ENCODE measurements at regions of chr5 and their contacts with region 1.

Region 1: GRCh38 chr5:140547508-140548299 is at the start of gene EIF4EBP3:
- DNase-seq: peak; percentile 89 to 95
- ATAC-seq: peak; percentile 97 to 99 (median 98)
- H3K4me3 ChIP-seq: peak within 1 kb of the TSS; percentile 60
- H3K4me3 Mint-ChIP-seq: peak within 1 kb of the TSS; percentile 86
- H3K27ac ChIP-seq: peak within 1 kb of the TSS; percentile 81
- H3K27ac Mint-ChIP-seq: peak within 1 kb of the TSS; percentile 87 to 95
- H3K4me1 ChIP-seq: peaks cover 30% of the 10 kb centered on the region
- H3K4me1 Mint-ChIP-seq: peaks cover 27 to 28% of the 10 kb centered on the region in 2 donors
- H3K27me3 ChIP-seq: no peaks in the 10 kb centered on the region
- H3K27me3 Mint-ChIP-seq: no peaks in the 10 kb centered on the region
- CTCF ChIP-seq: peak; percentile 65
- total RNA-seq, gene EIF4EBP3: 5.8 to 9.4 (median 6.0) TPM

Region 2: DNA sequence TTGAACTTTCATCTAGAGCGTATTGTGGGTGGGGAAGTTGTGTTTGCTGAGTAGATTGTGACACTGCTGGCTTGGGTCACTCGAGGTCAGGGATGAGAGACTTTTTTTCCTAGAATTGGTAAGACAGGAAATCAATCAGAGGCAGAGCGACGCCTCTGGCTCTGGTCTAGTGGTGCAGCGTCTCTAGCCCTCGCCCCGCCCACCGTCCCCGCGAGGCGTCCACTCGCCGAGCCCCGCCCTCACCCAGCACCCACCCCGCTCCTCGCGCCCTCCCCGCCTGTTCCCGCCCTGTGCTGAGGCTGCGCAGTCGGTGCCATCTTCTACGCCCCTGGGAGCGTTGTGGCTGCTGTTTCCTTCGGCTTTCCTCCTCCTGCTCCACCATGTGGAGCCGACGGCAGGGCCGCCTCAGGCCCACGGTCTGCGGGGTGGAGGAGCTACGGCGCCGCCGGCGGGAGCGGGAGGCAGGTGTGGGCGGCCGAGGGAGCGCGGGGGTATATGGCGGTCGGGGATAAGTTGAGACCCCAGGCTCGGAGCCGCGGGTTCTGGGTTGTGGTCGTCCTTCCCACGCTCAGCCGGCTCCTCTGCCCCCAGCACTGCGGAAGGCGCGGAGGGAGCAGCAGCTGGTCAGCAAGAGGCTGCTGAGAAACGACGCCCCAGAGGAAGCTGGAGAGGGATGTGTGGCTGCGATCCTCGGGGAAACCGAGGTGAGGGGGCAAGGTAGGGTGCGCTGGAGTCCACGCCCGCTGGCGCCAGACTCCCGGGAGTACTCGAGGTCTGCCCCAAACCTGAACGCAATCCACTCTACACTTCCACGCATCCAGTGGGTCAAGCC is 91.7 kb after region 1 on chr5 and contains the start of gene TMCO6:
- intact Hi-C with region 1: loop called (anchors 1 kb)
- DNase-seq: peak; percentile 94 to 98
- ATAC-seq: peak; percentile 98 to 100 (median 99)
- H3K4me3 ChIP-seq: peak within 1 kb of the TSS; percentile 65
- H3K4me3 Mint-ChIP-seq: peak within 1 kb of the TSS; percentile 92
- H3K27ac ChIP-seq: peak within 1 kb of the TSS; percentile 84
- H3K27ac Mint-ChIP-seq: peak within 1 kb of the TSS; percentile 93 to 95
- H3K4me1 ChIP-seq: peaks cover 18% of the 10 kb centered on the region
- H3K4me1 Mint-ChIP-seq: peaks cover 15 to 35% of the 10 kb centered on the region in 2 donors
- H3K27me3 ChIP-seq: no peaks in the 10 kb centered on the region
- H3K27me3 Mint-ChIP-seq: no peaks in the 10 kb centered on the region
- CTCF ChIP-seq: peak; percentile 61
- total RNA-seq, gene TMCO6: 17.9 to 19.5 (median 18.8) TPM

Region 3: GRCh38 chr5:141835928-141836670 is 1288.4 kb after region 1 on chr5:
- intact Hi-C with region 1: no loop called
- DNase-seq: no peak
- ATAC-seq: no peak
- H3K4me3 ChIP-seq: no peak overlapping the region
- H3K4me3 Mint-ChIP-seq: no peak overlapping the region
- H3K27ac ChIP-seq: no peak overlapping the region
- H3K27ac Mint-ChIP-seq: peak overlapping the region in 1 of 2 donors; percentile 30
- H3K4me1 ChIP-seq: peaks cover 5% of the 10 kb centered on the region
- H3K4me1 Mint-ChIP-seq: no peaks in the 10 kb centered on the region
- H3K27me3 ChIP-seq: no peaks in the 10 kb centered on the region
- H3K27me3 Mint-ChIP-seq: peaks cover 0 to 14% of the 10 kb centered on the region in 2 donors
- CTCF ChIP-seq: no peak

Measured in natural killer cell (primary cell).